ENCODE measurements at regions of chr19 and their contacts with region 1.

Region 1: DNA sequence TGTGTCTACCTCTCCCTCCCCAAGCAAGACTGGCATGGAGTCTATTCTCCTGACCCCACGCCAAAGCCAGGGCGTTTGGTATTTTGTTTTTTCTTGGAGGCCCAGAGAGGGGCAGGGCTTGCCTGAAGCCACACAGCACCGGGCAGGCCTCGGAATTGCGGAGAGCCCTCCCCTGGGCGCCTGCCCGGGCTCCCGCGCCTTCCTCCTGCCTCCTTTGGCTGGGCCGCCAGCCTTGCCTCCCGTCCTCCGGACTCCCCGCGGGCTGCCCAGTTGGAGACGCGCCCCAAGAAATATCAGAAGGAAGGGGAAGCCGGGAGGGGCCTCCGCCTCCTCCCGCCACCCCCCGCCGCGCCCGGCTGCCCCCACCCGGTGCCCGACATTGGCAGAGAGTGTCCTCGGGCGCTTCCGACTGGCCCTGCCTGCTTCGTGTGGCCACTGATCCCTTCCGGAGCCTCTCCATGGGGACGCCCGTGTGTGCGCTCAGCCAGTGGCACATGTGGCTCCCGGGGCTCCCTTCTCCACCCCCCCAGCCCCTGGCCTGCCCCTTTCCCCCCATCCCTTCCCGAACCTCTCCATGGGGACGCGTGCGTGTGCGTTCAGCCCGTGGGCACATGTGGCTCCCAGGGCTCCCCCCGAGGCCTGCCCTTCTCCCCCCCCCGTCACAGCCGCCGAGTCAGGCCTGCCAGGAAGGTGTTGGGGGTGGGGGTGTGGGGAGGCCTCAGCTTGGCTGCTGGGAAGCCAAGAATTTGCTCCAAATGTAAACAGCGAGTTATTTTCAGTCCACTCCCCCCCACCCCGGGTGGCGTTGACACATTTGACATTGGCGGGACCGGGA is 37.3 kb downstream of the NFIC start:
- DNase-seq: peak; percentile 93 to 97 (median 95)
- H3K4me3 ChIP-seq: peak overlapping the region; percentile 61
- H3K27ac ChIP-seq: peak overlapping the region; percentile 97 to 100
- H3K4me1 ChIP-seq: peaks cover 12% of the 10 kb centered on the region
- H3K27me3 ChIP-seq: no peaks in the 10 kb centered on the region
- CTCF ChIP-seq: no peak
- EP300 ChIP-seq: peak; percentile 90
- POLR2A ChIP-seq: peak; percentile 54

Region 2: DNA sequence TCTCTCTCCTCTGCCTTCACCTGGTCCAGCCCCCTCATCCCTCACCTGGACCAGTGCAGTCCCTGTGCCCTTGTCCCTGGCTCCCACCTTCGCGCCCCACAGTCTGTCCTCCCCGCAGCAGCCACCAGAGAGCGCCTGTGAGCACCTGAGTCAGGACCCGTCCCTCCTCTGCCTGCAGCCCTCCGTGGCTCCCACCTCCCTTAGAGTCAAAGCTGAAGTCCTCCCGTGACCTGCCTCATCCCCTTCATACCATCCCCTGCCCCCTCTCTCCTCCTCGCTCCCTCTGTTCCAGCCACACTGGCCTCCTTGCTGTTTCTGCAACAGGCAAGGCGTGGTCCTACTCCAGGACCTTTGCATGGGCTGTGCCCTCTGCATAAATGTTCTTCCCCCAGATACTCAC is 168.9 kb before region 1 on chr19:
- intact Hi-C with region 1: no loop called
- DNase-seq: no peak
- H3K4me3 ChIP-seq: no peak overlapping the region
- H3K27ac ChIP-seq: no peak overlapping the region
- H3K4me1 ChIP-seq: no peaks in the 10 kb centered on the region
- H3K27me3 ChIP-seq: no peaks in the 10 kb centered on the region
- CTCF ChIP-seq: no peak
- EP300 ChIP-seq: no peak
- POLR2A ChIP-seq: no peak

Region 3: DNA sequence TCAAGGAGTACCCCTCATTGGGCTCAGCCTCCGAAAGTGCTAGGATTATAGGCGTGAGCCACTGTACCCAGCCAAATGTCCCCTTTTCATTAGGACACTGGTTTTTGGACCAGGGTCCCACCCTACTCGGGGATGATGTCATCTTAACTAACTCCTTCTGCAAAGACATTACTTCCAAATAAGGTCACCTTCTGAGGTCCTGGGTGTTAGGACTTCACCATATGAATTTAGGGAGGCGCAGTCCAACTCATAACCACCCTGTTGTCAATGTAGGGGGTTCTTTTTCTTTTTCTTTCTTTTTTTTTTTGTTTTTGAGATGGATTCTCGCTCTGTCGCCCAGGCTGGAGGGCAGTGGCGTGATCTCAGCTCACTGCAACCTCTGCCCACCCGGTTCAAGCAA is 70.0 kb before region 1 on chr19:
- intact Hi-C with region 1: no loop called
- DNase-seq: no peak
- H3K4me3 ChIP-seq: no peak overlapping the region
- H3K27ac ChIP-seq: no peak overlapping the region
- H3K4me1 ChIP-seq: peaks cover 18% of the 10 kb centered on the region
- H3K27me3 ChIP-seq: no peaks in the 10 kb centered on the region
- CTCF ChIP-seq: no peak
- EP300 ChIP-seq: no peak
- POLR2A ChIP-seq: no peak

Region 4: DNA sequence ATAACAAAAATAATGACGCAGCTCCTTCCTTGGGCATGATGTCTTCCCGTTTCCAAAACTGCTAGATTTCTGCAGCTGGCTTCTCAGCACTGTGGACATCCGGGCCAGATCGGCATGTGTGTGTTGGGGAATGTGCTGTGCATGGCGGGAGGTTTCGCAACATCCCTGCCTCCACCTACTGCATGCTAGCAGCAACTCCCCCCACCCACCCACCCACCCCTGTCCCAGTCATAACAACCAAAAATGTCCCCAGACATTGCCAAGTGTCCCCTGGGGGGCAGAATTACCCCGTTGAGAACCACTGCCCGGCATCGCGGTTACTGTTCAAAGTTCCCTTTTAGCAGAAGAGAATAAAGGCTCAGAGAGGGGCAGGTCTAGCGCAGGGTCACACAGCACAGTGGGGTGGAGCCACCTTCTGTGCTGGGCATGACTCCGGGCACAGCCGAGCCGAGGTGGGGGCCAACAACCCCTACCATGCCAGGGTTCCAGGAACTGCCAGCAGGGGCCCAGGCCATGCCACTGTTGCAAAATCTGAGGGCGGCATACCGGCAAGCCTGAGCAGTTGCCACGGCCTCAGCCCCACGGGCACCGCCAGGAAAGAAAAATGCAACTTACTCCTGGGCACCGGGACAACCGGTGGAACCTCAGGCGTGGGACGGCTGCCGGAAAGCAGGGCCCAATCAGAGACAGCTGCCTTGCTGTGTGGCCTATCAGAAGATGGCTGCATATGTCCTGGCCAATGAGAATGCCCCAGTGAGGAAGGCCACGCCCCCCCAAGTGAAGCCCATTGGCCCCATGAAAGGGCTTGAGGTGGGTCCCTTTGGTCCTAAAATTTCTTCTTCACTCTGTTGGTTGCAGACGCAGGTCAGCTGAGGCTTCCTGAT is 59.8 kb before region 1 on chr19:
- intact Hi-C with region 1: loop called in 1 of 4 experiments (anchors 10 kb)
- DNase-seq: peak; percentile 81 to 91 (median 86)
- H3K4me3 ChIP-seq: no peak overlapping the region
- H3K27ac ChIP-seq: peak overlapping the region; percentile 68 to 85
- H3K4me1 ChIP-seq: peaks cover 16% of the 10 kb centered on the region
- H3K27me3 ChIP-seq: no peaks in the 10 kb centered on the region
- CTCF ChIP-seq: no peak
- EP300 ChIP-seq: peak; percentile 42
- POLR2A ChIP-seq: no peak

Region 5: DNA sequence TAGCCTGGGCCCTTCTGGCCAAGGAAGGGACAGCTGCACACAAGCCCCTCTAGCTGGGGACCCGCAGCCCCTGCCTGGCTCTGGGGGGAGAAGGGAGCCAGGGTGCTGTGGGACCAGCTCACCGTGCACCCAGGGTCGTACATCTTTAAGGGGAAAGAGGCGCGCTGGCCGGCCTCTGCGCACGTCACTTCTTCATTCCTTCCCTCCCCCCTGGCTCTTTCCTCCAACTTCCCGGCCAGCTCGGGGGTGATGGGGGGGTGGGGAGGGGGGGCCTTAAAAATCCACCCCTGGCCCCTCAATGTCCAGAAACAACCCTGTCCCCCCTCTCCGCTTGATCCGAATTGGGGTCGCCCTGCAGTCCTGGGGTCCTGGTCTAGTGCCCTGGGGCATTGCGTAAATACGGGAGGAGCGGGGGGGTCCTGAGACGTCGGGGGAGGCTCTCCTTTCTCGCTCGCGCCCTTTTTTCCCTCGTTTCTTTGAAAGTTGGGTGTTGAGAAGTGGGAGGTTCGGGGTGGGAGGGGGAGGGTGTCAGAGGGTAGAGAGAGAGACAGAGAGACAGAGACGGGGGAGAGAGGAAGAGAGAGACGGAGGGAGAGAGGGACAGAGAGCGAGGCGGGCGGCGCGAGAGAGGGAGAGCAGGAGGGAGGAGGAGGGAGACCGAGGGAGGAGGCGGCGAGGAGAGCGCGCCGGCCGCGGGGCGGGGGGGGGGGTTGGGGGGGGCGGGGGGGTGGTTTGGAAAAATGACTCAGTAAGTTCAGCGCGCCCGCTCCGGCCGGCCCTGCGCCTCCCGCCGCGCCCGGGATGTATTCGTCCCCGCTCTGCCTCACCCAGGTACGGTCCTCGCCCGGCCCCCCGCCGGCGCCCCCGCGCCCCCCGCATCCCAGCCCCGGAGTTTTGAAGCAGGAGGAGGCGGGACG is 37.6 kb before region 1 on chr19 and contains the start of gene NFIC:
- intact Hi-C with region 1: loop called in 1 of 4 experiments (anchors 2 kb)
- DNase-seq: peak; percentile 84 to 91 (median 90)
- H3K4me3 ChIP-seq: peak within 1 kb of the TSS; percentile 88
- H3K27ac ChIP-seq: peak within 1 kb of the TSS; percentile 97 to 99
- H3K4me1 ChIP-seq: peaks cover 24% of the 10 kb centered on the region
- H3K27me3 ChIP-seq: no peaks in the 10 kb centered on the region
- CTCF ChIP-seq: no peak
- EP300 ChIP-seq: no peak
- POLR2A ChIP-seq: peak; percentile 55
- total RNA-seq, gene NFIC: 62.0 to 345 (median 283) TPM

Region 6: DNA sequence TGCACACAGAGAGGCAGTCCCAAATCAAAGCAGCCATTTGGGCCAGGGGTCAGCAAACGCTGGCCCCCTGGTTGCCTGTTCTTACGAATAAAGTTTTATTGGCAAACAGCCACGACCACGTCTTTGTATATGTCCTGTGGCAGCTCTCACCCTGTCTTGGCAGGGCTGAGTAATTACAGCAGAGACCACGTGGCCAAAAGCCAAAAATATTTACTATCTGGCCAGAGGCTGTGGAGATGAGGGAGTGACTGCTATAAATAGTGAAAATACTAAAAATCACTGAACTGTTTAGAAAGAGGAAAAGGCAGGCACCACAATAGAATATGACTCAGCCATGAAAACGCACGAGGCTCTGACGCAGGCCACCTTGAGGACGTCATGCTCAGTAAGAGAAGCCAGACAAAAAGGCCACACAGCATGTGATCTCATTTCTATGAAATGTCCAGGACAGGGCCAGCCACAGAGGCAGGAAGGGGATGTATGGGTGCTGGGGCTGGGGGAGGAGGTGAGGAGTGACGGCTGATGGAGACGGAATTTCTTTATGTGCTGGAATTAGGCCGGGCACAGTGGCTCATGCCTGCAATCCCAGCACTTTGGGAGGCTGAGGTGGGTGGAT is 47.2 kb after region 1 on chr19:
- intact Hi-C with region 1: no loop called
- DNase-seq: peak in 3 of 5 donors; percentile 60 to 76 (median 69)
- H3K4me3 ChIP-seq: no peak overlapping the region
- H3K27ac ChIP-seq: peak overlapping the region; percentile 59 to 83
- H3K4me1 ChIP-seq: peaks cover 3% of the 10 kb centered on the region
- H3K27me3 ChIP-seq: no peaks in the 10 kb centered on the region
- CTCF ChIP-seq: no peak
- EP300 ChIP-seq: peak; percentile 95
- POLR2A ChIP-seq: no peak